CD4-positive, alpha-beta T cell (primary cell): ENCODE measurements at regions of chr4 and their contacts with region 1.

Region 1: DNA sequence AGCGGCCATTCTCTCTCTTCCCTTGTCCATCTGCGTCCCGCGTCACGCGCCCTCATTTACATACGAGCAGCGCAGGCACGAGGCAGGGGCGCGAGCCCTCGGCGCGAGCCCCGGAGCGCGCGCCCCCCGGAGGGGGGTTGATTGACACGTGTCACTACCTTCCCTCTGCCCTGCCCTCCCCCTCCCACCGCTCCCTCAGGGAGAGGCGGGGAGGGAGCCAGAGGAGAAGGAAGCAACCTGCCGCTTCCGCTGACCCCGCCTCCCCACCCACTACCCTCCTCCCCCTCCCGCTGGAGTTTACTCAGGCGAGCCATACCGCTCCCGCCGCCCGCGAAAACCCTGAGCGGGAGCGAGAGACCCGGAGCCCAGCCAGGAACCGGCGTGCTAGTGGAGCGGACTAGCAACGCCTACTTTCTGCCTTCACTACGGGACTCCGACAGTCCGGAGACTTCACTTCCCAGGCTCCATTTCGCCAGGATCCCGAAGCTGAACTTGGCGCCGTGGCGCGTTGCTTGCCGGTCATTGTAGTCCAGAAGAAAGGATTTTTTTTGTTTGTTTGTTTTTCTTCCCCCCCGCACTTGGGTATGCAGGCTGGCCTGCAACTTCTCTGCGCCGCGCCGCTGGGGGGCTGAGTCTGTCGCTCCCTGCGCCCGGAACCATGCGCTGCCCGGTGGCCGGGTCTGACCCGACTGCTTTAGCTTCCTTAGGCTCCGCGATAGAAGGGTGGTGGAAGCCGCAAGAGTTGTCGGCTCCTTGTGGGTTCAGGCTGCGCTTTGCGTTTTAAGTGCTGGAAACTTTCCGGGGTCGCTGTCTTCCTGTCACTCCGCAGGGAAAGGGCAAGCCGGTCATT is at the start of gene LCORL:
- DNase-seq: peak; percentile 70 to 95 (median 80)
- ATAC-seq: peak; percentile 83
- H3K4me3 ChIP-seq: peak within 1 kb of the TSS; percentile 75
- H3K4me3 Mint-ChIP-seq: peak within 1 kb of the TSS; percentile 99
- H3K27ac ChIP-seq: peak within 1 kb of the TSS; percentile 61 to 77
- H3K27ac Mint-ChIP-seq: peak within 1 kb of the TSS; percentile 84
- H3K4me1 ChIP-seq: peaks cover 15% of the 10 kb centered on the region
- H3K4me1 Mint-ChIP-seq: peaks cover 32% of the 10 kb centered on the region
- H3K27me3 ChIP-seq: peaks cover 3 to 11% of the 10 kb centered on the region in 2 experiments
- H3K27me3 Mint-ChIP-seq: peaks cover 33% of the 10 kb centered on the region
- CTCF ChIP-seq: no peak
- total RNA-seq, gene LCORL: 6.3 to 6.5 TPM

Region 2: DNA sequence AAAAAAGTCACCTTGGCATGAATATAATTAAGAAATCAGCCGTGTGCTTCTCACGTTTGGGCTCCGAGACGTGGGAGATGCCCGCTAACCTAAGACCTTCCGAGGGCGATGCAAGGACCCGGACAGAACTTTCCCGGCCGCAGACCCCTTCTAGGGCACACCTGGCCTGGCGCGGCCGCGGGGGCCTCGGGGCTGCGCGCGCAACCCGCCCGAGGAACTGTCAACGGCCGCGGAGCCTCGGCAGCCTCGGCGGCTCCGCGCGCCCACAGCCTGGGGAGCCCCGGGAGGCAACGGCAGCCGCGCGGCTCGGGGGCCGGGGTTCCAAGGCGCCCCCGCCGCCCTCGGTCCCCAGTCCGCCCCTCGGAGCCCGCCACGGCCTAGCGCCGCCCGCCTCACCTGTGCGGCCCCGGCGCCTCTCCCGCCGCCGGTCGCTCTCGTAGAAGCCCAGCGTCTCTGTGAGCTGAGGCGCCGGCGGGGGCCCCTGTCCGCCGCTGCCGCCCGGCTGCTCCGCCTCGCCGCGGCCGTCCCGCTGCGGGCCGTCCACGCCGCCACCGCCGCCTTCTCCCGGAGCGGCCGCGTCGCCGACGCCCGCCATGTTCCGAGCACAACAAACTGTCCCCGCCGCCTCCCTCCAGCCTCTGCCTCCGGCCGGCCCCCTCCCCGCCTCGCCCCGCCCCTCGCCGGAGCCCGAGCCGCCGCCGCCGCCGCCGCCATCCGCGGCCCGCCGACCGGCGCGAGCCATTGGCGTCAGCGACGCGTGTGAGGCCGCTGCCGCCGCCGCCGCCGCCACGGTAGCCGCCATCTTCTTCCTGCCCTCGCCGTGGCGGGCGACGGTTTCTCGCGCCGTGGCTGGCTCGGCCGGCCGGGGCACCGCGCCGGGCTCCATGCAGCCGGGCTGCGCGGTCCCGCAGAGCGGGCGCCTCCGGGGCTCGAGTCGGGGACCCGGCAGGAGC is 1795.8 kb before region 1 on chr4 and contains the start of gene TAPT1:
- CTCF ChIA-PET with region 1: no interaction called
- POLR2A ChIA-PET with region 1: interaction called, 4 read pairs
- intact Hi-C with region 1: loop called in 1 of 2 experiments (anchors 10 kb)
- DNase-seq: peak; percentile 45 to 89 (median 71)
- ATAC-seq: peak; percentile 52
- H3K4me3 ChIP-seq: peak within 1 kb of the TSS; percentile 80
- H3K4me3 Mint-ChIP-seq: peak within 1 kb of the TSS; percentile 97
- H3K27ac ChIP-seq: peak within 1 kb of the TSS; percentile 71 to 73
- H3K27ac Mint-ChIP-seq: peak within 1 kb of the TSS; percentile 97
- H3K4me1 ChIP-seq: peaks cover 21% of the 10 kb centered on the region
- H3K4me1 Mint-ChIP-seq: peaks cover 65% of the 10 kb centered on the region
- H3K27me3 ChIP-seq: no peaks in the 10 kb centered on the region
- H3K27me3 Mint-ChIP-seq: no peaks in the 10 kb centered on the region
- CTCF ChIP-seq: no peak
- total RNA-seq, gene TAPT1: 70.6 to 77.1 TPM

Region 3: DNA sequence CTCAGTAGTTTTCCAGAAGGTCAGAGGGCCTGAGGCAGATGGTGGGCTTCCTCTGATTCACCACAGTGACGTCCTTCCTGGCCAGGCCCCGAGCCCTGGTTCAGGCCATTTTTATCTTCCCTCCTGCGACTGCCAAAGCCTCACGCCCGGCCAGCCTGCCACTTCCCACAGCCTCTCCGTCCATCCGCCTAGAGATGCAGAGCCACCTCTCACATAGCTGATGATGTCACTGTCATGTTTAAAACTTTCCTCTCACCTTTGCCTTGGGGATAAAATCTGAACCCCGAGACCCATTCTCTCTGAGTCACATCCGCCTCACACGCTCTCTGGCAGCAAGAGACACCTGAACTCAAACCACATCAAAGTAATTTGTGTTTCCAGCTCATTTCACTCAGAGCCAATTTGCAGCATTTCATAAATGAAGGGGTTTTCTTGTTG is 685.4 kb before region 1 on chr4:
- CTCF ChIA-PET with region 1: no interaction called
- POLR2A ChIA-PET with region 1: no interaction called
- intact Hi-C with region 1: loop called in 1 of 2 experiments (anchors 10 kb)
- DNase-seq: peak; percentile 41 to 92 (median 63)
- ATAC-seq: peak; percentile 97
- H3K4me3 ChIP-seq: no peak overlapping the region
- H3K4me3 Mint-ChIP-seq: peak overlapping the region; percentile 17
- H3K27ac ChIP-seq: no peak overlapping the region
- H3K27ac Mint-ChIP-seq: peak overlapping the region; percentile 62
- H3K4me1 ChIP-seq: peaks cover 27% of the 10 kb centered on the region
- H3K4me1 Mint-ChIP-seq: peaks cover 24% of the 10 kb centered on the region
- H3K27me3 ChIP-seq: no peaks in the 10 kb centered on the region
- H3K27me3 Mint-ChIP-seq: no peaks in the 10 kb centered on the region
- CTCF ChIP-seq: no peak

Region 4: GRCh38 chr4:17511950-17512795 is 509.8 kb before region 1 on chr4 and contains the start of gene QDPR:
- CTCF ChIA-PET with region 1: no interaction called
- POLR2A ChIA-PET with region 1: no interaction called
- intact Hi-C with region 1: loop called in 1 of 2 experiments (anchors 2 kb)
- DNase-seq: peak; percentile 51 to 87 (median 68)
- ATAC-seq: peak; percentile 91
- H3K4me3 ChIP-seq: peak within 1 kb of the TSS; percentile 86
- H3K4me3 Mint-ChIP-seq: peak within 1 kb of the TSS; percentile 99
- H3K27ac ChIP-seq: peak within 1 kb of the TSS in 1 of 2 donors; percentile 9
- H3K27ac Mint-ChIP-seq: peak within 1 kb of the TSS; percentile 84
- H3K4me1 ChIP-seq: peaks cover 23% of the 10 kb centered on the region
- H3K4me1 Mint-ChIP-seq: peaks cover 33% of the 10 kb centered on the region
- H3K27me3 ChIP-seq: no peaks in the 10 kb centered on the region
- H3K27me3 Mint-ChIP-seq: peaks cover 6% of the 10 kb centered on the region
- CTCF ChIP-seq: peak; percentile 47
- total RNA-seq, gene QDPR: 15.3 to 15.7 TPM

Region 5: DNA sequence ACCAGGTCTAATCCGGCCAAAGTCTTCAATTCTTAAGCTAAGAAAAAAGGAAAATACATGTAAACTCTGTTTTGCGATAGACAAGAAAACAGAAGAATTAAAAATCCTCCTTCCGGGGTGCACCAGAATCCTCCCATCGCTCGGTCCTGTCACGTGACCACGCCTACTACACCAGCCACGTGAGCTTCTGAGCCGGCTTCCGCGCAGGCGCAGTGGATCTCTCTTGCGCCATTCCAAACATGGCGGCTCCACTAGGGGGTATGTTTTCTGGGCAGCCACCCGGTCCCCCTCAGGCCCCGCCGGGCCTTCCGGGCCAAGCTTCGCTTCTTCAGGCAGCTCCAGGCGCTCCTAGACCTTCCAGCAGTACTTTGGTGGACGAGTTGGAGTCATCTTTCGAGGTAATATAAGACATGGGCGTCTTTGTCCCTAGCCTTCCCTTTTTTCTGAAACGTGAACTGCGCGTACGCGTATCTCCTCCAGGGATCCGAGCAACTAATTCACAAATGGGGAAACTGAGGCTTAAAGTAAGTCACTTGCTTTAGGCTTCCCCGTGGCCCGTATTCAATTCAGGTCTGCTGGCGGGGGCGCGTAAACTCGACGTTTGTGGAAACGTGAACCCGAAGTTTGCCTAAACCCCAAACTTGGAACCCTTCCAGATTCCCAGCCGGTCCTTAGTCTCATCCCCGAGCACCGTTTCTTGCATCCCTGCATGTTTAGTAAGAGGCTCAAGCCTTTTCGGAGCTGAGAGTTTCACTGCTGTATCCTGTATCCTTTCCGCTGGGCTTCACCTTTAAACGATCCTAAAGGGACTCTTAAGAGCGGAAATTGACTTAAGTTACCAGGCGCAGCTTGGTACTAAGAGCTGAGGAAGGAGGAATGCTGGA is 407.3 kb before region 1 on chr4 and contains the start of gene MED28:
- CTCF ChIA-PET with region 1: no interaction called
- POLR2A ChIA-PET with region 1: interaction called, 5 read pairs
- intact Hi-C with region 1: loop called (anchors 1 to 2 kb)
- DNase-seq: peak; percentile 90 to 98 (median 94)
- ATAC-seq: peak; percentile 93
- H3K4me3 ChIP-seq: peak within 1 kb of the TSS; percentile 94
- H3K4me3 Mint-ChIP-seq: peak within 1 kb of the TSS; percentile 93
- H3K27ac ChIP-seq: peak within 1 kb of the TSS; percentile 68 to 92
- H3K27ac Mint-ChIP-seq: peak within 1 kb of the TSS; percentile 94
- H3K4me1 ChIP-seq: peaks cover 55% of the 10 kb centered on the region
- H3K4me1 Mint-ChIP-seq: peaks cover 50% of the 10 kb centered on the region
- H3K27me3 ChIP-seq: no peaks in the 10 kb centered on the region
- H3K27me3 Mint-ChIP-seq: no peaks in the 10 kb centered on the region
- CTCF ChIP-seq: no peak
- total RNA-seq, gene MED28: 50.5 to 64.7 TPM

Region 6: DNA sequence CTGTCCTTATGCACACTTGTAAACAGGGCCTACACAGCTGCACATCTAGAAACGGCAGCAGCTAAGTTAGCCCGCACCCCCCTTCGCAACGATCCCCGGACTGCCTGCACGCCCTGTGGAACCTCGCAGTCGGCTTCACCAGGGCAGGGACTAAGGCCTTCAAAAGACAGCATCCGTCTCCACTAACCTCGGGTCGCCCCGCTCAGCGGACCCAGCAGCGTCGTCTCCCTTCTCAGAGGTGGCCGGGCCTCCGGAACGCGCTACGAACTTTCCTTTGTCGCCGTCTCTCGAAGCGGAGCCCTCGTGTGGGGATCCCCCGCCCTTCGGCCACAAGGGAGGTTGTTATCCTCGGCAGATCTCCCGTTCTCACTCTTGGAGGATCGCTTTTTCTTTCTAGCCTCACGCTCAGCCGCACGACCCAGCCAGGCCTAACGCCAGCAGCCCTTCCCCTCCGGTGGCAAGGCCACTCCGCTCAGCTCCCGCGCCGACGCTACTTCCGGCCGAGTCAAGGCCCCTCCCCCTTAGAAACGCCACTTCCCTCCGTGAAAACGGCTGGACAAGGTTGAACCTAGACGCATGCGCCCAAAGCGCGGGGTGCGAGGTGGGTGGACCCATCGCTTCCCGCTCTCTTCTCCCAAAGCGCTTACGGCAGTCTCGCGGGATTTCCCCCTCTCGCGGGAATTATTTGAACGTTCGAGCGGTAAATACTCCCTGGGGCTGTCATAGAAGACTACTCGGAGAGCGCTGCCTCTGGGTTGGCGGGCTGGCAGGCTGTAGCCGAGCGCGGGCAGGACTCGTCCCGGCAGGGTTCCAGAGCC is 211.5 kb before region 1 on chr4 and contains the starts of genes DCAF16 and NCAPG:
- CTCF ChIA-PET with region 1: no interaction called
- POLR2A ChIA-PET with region 1: interaction called, 6 read pairs
- intact Hi-C with region 1: loop called (anchors 1 to 5 kb)
- DNase-seq: peak; percentile 97 to 100 (median 99)
- ATAC-seq: peak; percentile 86
- H3K4me3 ChIP-seq: peak within 1 kb of the TSS; percentile 92
- H3K4me3 Mint-ChIP-seq: peak within 1 kb of the TSS; percentile 97
- H3K27ac ChIP-seq: peak within 1 kb of the TSS; percentile 92 to 96
- H3K27ac Mint-ChIP-seq: peak within 1 kb of the TSS; percentile 96
- H3K4me1 ChIP-seq: peaks cover 20% of the 10 kb centered on the region
- H3K4me1 Mint-ChIP-seq: peaks cover 63% of the 10 kb centered on the region
- H3K27me3 ChIP-seq: no peaks in the 10 kb centered on the region
- H3K27me3 Mint-ChIP-seq: no peaks in the 10 kb centered on the region
- CTCF ChIP-seq: no peak
- total RNA-seq, gene DCAF16: 88.5 to 91.4 TPM
- total RNA-seq, gene NCAPG: 0.58 to 0.61 TPM

Region 7: DNA sequence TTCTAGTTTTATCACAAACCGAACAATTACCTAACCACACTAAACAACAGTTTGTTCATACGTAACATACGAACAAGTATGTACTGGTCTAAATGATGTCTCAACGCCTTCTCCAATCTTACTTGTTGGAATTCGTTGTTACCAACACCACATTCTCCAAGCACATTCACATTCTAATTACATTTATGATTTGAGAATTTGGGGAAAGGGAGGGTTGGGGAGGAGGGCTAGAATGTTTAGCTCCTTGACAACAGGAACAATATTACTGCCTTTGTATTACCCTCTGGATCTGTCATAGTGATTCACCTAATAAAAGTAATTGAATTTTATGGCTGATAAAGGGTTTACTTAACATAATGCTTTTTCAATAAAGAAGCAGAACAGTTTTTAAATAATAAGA is 24.8 kb before region 1 on chr4:
- CTCF ChIA-PET with region 1: no interaction called
- POLR2A ChIA-PET with region 1: no interaction called
- intact Hi-C with region 1: no loop called
- DNase-seq: no peak
- ATAC-seq: no peak
- H3K4me3 ChIP-seq: no peak overlapping the region
- H3K4me3 Mint-ChIP-seq: no peak overlapping the region
- H3K27ac ChIP-seq: no peak overlapping the region
- H3K27ac Mint-ChIP-seq: no peak overlapping the region
- H3K4me1 ChIP-seq: no peaks in the 10 kb centered on the region
- H3K4me1 Mint-ChIP-seq: peaks cover 10% of the 10 kb centered on the region
- H3K27me3 ChIP-seq: no peaks in the 10 kb centered on the region
- H3K27me3 Mint-ChIP-seq: no peaks in the 10 kb centered on the region
- CTCF ChIP-seq: no peak

Region 8: DNA sequence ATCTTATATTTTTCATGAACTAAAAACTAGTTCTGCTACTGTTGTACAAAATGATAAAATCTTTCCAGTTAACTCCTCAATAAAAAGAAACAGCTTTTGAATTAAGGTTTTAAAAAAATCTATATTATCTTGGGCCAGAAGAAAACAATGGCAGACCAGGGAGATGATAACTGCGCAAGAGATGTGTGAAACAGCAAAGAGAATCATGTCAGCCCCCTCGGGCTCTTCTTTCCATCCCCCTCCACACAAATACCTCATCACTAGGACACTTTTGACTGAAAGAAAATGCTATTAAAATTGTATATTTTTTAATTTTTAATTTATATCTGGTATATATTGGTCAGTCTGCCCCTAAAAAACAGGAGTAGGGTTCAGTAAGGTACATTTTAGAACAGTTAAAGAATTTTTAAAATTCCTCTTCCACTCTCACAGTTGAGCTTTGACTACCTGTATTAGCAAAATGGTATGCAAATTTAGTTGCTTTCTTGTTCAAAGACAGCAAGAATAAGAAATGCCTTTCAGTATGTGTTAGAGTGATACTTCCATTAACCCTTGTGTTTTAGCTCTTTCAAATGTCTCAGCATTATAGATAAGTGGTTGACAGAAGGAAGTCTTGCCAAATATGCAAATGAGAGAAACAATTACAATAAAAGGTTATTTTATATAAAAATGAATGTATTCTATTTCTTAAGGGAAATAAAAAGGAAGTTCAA is 36.0 kb after region 1 on chr4:
- CTCF ChIA-PET with region 1: no interaction called
- POLR2A ChIA-PET with region 1: interaction called, 5 read pairs
- intact Hi-C with region 1: loop called in 1 of 2 experiments (anchors 2 kb)
- DNase-seq: peak in 1 of 14 experiments; percentile 11
- ATAC-seq: no peak
- H3K4me3 ChIP-seq: no peak overlapping the region
- H3K4me3 Mint-ChIP-seq: no peak overlapping the region
- H3K27ac ChIP-seq: no peak overlapping the region
- H3K27ac Mint-ChIP-seq: no peak overlapping the region
- H3K4me1 ChIP-seq: peaks cover 8% of the 10 kb centered on the region
- H3K4me1 Mint-ChIP-seq: peaks cover 26% of the 10 kb centered on the region
- H3K27me3 ChIP-seq: peaks cover 15 to 32% of the 10 kb centered on the region in 2 experiments
- H3K27me3 Mint-ChIP-seq: peaks cover 63% of the 10 kb centered on the region
- CTCF ChIP-seq: no peak